ENCODE measurements at regions of chr16 and their contacts with region 1.

Region 1: GRCh38 chr16:27698266-27698665 is 148.3 kb downstream of the KATNIP start:
- H3K4me3 ChIP-seq: no peak overlapping the region
- H3K27ac ChIP-seq: no peak overlapping the region
- H3K4me1 ChIP-seq: no peaks in the 10 kb centered on the region
- CTCF ChIP-seq: no peak

Region 2: DNA sequence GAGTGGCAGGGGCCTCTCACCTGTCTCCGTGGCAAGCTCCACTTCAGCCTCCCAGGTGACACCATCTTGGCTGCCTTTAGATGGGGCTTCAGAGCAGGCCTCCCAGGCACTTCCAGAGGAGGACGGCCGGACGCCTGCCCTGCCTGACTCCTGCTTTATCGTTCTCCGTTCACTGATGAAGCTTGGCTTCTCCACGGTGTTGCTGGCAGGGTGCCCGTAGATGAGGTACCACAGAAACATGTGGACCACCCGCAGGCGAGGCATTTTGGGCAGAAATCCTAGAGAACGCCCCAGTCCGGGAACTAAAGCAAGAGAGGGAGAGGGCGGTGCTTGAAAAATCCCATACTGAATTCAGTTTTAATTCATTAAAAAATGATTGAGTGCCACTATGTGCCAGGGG is 203.1 kb before region 1 on chr16:
- CTCF ChIA-PET with region 1: no interaction called
- POLR2A ChIA-PET with region 1: no interaction called
- H3K4me3 ChIP-seq: no peak overlapping the region
- H3K27ac ChIP-seq: no peak overlapping the region
- H3K4me1 ChIP-seq: no peaks in the 10 kb centered on the region
- CTCF ChIP-seq: no peak

Region 3: GRCh38 chr16:27549859-27550581 is 148.2 kb before region 1 on chr16 and contains the starts of genes GTF3C1 and KATNIP:
- CTCF ChIA-PET with region 1: no interaction called
- POLR2A ChIA-PET with region 1: no interaction called
- H3K4me3 ChIP-seq: peak within 1 kb of the TSS; percentile 97
- H3K27ac ChIP-seq: no peak within 1 kb of the TSS; the same call in 1 of the 2 replicates
- H3K4me1 ChIP-seq: no peaks in the 10 kb centered on the region
- CTCF ChIP-seq: no peak

Region 4: DNA sequence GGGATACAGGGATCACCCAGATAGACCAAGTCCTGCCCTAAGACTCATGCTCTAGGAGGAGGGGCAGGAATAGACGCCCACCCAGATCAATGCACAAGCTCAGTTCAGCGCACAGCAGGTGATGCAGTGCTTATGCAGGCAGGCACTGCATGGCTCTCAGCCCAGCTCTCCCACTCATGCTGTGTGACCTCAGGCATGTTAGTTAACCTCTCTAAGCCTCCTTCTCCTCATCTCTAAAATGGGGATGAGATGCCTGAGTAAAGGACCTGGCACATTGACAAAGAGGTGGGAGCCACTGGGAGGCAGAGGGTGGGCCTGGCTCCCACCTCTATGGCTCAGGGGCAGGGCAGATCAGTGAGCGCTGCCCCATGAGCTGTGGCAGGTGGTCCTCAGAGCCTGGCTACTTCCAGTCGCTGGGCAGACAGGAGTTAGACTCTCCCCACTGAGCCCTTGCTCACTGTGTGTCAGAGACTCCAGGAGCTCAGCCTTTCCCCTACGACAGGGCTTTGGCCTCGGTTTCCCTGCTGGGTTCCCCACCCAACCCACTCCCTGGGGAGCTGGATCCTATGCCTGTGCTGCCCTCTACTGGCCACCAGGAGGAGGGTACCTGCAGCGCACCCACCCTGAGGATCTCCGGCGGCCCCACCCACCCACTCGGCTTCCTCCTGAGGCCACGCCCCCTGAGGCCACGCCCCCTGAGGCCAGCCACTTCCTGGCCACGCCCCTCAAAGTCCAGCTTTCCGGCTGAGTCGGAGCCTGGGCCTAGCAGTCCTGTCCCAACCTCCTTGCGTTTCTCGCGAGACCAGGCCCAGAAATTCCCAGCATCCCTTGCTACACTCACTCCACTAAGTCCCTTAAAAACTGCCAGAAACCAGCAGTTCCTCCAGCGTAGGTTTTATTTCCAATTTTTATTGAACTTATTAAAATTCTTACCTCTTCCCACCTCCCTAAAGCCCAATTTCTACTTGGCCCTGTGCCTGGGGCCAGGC is 169.2 kb after region 1 on chr16:
- CTCF ChIA-PET with region 1: interaction called, 13 read pairs
- POLR2A ChIA-PET with region 1: no interaction called
- H3K4me3 ChIP-seq: no peak overlapping the region
- H3K27ac ChIP-seq: no peak overlapping the region
- H3K4me1 ChIP-seq: no peaks in the 10 kb centered on the region
- CTCF ChIP-seq: no peak